ENCODE measurements at regions of chr7 and their contacts with region 1.

Region 1: DNA sequence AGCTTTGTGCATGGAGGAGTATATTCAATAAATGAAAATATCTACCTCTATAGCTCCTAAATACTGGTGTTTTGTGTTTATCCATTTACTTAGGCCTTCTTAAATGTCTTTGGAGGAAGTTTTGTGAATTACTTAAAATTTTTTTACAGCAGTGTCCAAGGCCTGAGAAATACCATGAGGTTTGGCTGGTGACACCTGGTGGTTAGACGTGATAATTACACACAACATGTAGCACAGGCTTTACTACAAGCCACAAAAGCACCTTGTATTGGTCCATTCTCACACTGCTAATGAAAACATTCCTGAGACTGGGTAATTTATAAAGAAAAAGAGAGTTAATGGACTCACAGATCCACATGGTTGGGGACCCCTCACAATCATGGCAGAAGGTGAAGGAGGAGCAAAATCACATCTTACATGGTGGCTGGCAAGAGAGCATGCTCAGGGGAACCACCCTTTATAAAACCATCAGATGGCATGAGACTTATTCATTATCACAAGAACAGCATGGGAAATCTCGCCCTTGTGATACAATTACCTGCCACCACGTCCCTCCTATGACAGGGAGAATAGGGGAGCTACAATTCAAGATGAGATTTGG is 20.6 kb downstream of the HYAL4 start:
- DNase-seq: peak; percentile 62
- ATAC-seq: peak; percentile 91
- H3K4me3 ChIP-seq: no peak overlapping the region
- H3K27ac ChIP-seq: no peak overlapping the region
- H3K4me1 ChIP-seq: no peaks in the 10 kb centered on the region
- H3K27me3 ChIP-seq: no peaks in the 10 kb centered on the region
- CTCF ChIP-seq: peak; percentile 77
- EP300 ChIP-seq: no peak
- POLR2A ChIP-seq: no peak
- RAD21 ChIP-seq: peak; percentile 55; the same call in 1 of the 2 replicates

Region 2: GRCh38 chr7:123120286-123120685 is 745.3 kb before region 1 on chr7:
- CTCF ChIA-PET with region 1: no interaction called
- POLR2A ChIA-PET with region 1: no interaction called
- in situ Hi-C with region 1: no loop called
- intact Hi-C with region 1: no loop called
- DNase-seq: no peak
- ATAC-seq: no peak
- H3K4me3 ChIP-seq: no peak overlapping the region
- H3K27ac ChIP-seq: no peak overlapping the region
- H3K4me1 ChIP-seq: no peaks in the 10 kb centered on the region
- H3K27me3 ChIP-seq: no peaks in the 10 kb centered on the region
- CTCF ChIP-seq: no peak
- EP300 ChIP-seq: no peak
- POLR2A ChIP-seq: no peak
- RAD21 ChIP-seq: no peak

Region 3: GRCh38 chr7:123635551-123636359 is 229.9 kb before region 1 on chr7:
- CTCF ChIA-PET with region 1: interaction called, 9 read pairs
- POLR2A ChIA-PET with region 1: no interaction called
- in situ Hi-C with region 1: loop called (anchors 10 kb)
- intact Hi-C with region 1: loop called (anchors 1 kb)
- DNase-seq: peak; percentile 5
- ATAC-seq: peak; percentile 60; the same call in 2 of the 3 replicates
- H3K4me3 ChIP-seq: no peak overlapping the region
- H3K27ac ChIP-seq: no peak overlapping the region
- H3K4me1 ChIP-seq: no peaks in the 10 kb centered on the region
- H3K27me3 ChIP-seq: no peaks in the 10 kb centered on the region
- CTCF ChIP-seq: peak; percentile 55
- EP300 ChIP-seq: no peak
- POLR2A ChIP-seq: no peak
- RAD21 ChIP-seq: no peak; the same call in 1 of the 2 replicates

Region 4: DNA sequence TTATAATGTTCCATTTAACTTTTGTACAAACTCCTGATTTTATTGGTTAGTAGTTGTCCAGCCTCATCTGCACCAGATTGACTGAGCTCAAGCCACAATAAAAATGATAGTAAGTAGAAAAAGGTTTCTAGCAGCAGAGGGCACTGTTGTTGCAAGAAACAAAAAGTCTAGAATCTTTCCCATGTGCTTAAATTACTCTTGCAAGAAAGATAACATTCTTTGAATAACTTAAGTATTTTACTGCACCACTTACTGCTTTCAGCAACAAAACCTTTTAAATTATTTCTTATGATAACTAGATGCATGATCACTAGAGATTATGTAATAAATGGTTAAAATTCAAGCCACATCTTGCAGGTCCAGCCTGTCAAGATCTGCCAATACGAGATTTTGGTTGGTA is 182.9 kb before region 1 on chr7:
- CTCF ChIA-PET with region 1: interaction called, 22 read pairs
- POLR2A ChIA-PET with region 1: no interaction called
- in situ Hi-C with region 1: loop called (anchors 5 kb)
- intact Hi-C with region 1: loop called (anchors 2 kb)
- DNase-seq: peak; percentile 52
- ATAC-seq: peak; percentile 66
- H3K4me3 ChIP-seq: no peak overlapping the region
- H3K27ac ChIP-seq: no peak overlapping the region
- H3K4me1 ChIP-seq: 0 out of 2 replicates have a peak, but pooled peaks cover 8% of the 10 kb centered on the region
- H3K27me3 ChIP-seq: no peaks in the 10 kb centered on the region
- CTCF ChIP-seq: peak; percentile 62
- EP300 ChIP-seq: no peak
- POLR2A ChIP-seq: no peak
- RAD21 ChIP-seq: peak; percentile 52; the same call in 1 of the 2 replicates

Region 5: GRCh38 chr7:123689250-123689649 is 176.4 kb before region 1 on chr7:
- CTCF ChIA-PET with region 1: no interaction called
- POLR2A ChIA-PET with region 1: no interaction called
- in situ Hi-C with region 1: loop called (anchors 5 kb)
- intact Hi-C with region 1: no loop called
- DNase-seq: no peak
- ATAC-seq: no peak
- H3K4me3 ChIP-seq: no peak overlapping the region
- H3K27ac ChIP-seq: no peak overlapping the region
- H3K4me1 ChIP-seq: no peaks in the 10 kb centered on the region
- H3K27me3 ChIP-seq: no peaks in the 10 kb centered on the region
- CTCF ChIP-seq: no peak
- EP300 ChIP-seq: no peak
- POLR2A ChIP-seq: no peak
- RAD21 ChIP-seq: no peak

Measured in HepG2 (cell line).